PC-3 (cell line): ENCODE measurements at regions of chr18 and their contacts with region 1.

Region 1: DNA sequence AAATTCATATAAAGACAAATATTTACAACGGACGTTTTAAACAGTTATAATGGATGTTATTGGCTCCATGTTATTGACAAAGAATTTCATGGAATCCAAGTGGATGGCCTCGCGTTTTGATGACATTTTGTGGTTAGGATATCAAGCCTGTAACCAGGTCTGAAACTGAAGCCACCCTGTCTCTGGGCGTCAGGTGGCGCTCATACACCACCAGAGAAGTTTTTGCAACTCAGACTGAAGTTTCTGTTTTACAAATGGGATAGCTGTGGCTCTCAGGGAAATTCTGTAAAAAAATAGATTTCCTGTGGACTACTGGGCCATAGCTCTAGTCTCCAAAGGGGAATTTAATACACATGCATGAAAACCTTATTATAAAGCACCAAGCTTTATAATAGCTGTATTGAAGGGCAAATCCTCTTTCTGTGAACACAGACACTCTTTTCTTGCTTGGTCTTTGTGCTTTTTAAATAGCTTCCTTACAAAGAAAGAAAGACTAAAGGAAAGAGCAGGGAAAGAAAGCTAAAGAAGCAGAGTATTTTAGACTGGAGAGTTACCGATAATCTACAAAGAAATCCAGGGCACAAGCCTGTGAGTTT is 86.7 kb downstream of the C18orf54 start:
- DNase-seq: peak; percentile 76
- ATAC-seq: peak; percentile 82
- H3K4me3 ChIP-seq: no peak overlapping the region
- H3K27ac ChIP-seq: no peak overlapping the region
- H3K4me1 ChIP-seq: no peaks in the 10 kb centered on the region
- H3K27me3 ChIP-seq: no peaks in the 10 kb centered on the region
- CTCF ChIP-seq: peak; percentile 94

Region 2: DNA sequence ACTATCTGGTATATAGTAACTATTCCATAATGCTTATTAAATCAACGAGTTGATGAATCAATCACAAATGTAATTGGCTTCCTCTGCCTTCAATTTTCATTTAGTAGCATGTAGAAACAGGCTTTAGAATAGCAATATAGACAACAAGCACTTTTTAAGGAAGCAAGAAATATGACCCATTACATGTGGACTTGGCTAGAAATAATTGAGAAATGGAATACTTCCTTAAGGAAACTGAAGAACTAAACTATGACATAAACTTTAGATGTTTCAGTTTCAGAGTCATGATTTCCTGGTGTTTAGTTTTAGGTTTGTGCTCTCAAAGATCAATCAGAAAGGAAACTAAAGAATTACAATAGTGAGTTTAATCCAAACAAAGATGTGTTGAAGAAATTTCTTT is 663.8 kb before region 1 on chr18:
- CTCF ChIA-PET with region 1: no interaction called
- POLR2A ChIA-PET with region 1: no interaction called
- intact Hi-C with region 1: no loop called
- DNase-seq: no peak
- ATAC-seq: no peak
- H3K4me3 ChIP-seq: no peak overlapping the region
- H3K27ac ChIP-seq: no peak overlapping the region
- H3K4me1 ChIP-seq: no peaks in the 10 kb centered on the region
- H3K27me3 ChIP-seq: no peaks in the 10 kb centered on the region
- CTCF ChIP-seq: no peak

Region 3: GRCh38 chr18:54392543-54393023 is 51.8 kb before region 1 on chr18:
- CTCF ChIA-PET with region 1: interaction called, 4 read pairs
- POLR2A ChIA-PET with region 1: no interaction called
- intact Hi-C with region 1: loop called (anchors 2 kb)
- DNase-seq: peak; percentile 90
- ATAC-seq: peak; percentile 27
- H3K4me3 ChIP-seq: no peak overlapping the region
- H3K27ac ChIP-seq: no peak overlapping the region
- H3K4me1 ChIP-seq: peaks cover 25% of the 10 kb centered on the region
- H3K27me3 ChIP-seq: no peaks in the 10 kb centered on the region
- CTCF ChIP-seq: peak; percentile 76

Region 4: DNA sequence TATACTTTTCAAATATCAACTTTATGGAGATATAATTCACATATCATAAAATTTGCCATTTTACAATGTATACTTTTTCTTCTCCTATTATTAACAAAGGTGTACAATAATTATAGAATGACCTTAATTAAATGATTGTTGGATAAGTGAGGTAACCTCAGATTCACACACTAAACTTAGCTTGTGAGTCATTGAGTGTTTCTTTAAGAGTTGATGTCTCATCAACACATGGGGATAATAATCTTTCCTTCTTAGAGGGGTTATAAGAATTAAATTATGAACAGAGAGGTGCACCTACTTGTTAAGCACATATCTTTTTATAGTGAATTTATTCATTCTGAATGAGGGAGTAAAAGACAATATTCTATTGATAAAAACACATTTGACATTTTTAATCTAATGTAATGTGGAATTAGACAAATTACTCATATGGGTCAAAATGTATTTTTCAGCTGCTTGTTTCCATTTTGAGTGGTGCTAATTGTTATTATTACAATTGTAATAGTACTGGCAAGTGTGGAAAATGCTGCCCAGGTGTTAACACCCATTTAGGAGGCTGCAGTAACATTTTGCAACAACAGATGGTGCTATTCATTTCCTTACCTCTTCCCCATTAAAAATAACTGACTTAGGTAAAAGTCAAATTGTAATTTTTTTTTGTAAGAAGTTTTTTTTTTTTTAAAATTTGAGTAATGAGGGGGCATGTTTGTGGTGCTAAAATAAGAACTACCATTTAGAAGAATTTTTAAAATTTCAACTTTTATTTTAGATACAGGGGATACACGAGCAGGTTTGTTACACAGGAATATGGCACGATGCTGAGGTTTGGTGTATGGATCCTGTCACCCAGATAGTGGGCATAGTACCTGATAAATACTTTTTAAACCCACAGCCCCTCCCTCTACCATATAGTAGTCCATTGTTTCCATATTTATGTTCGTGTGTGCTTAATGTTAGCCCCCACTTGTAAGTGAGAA is 114.5 kb after region 1 on chr18:
- CTCF ChIA-PET with region 1: no interaction called
- POLR2A ChIA-PET with region 1: no interaction called
- intact Hi-C with region 1: loop called (anchors 1 kb)
- DNase-seq: peak; percentile 59
- ATAC-seq: no peak
- H3K4me3 ChIP-seq: no peak overlapping the region
- H3K27ac ChIP-seq: no peak overlapping the region
- H3K4me1 ChIP-seq: no peaks in the 10 kb centered on the region
- H3K27me3 ChIP-seq: no peaks in the 10 kb centered on the region
- CTCF ChIP-seq: peak; percentile 80

Region 5: GRCh38 chr18:54647176-54647575 is 202.8 kb after region 1 on chr18:
- CTCF ChIA-PET with region 1: no interaction called
- POLR2A ChIA-PET with region 1: no interaction called
- intact Hi-C with region 1: loop called (anchors 1 kb)
- DNase-seq: peak; percentile 69
- ATAC-seq: peak; percentile 74
- H3K4me3 ChIP-seq: no peak overlapping the region
- H3K27ac ChIP-seq: no peak overlapping the region
- H3K4me1 ChIP-seq: no peaks in the 10 kb centered on the region
- H3K27me3 ChIP-seq: peaks cover 5% of the 10 kb centered on the region; the same call in 1 of the 2 replicates
- CTCF ChIP-seq: peak; percentile 77

Region 6: DNA sequence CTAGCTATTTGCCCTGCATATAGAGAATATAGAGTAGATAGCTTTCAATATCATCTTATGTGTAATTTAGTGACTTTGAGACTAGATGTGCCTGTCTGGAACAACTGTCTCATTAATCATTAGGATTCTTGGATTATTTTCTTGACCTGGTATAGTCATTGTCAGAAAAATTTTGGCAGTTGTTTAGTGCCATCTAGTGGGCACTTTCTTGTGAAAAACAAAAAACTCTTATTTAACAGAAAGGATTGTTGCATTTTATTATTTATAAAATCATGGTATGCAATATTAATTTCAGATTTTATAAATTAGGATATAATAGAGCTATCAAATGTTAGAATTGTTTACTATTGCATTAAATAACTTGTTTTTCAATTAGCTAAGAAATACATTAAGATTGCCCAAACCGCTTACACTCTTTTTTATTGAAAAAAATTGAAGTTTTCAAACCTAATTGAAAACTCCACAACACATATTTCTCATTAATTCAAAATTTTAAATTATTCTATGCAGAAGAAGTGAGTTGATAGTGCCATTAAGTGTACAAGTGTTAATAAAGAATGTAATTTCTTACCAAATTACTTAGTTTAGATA is 227.0 kb after region 1 on chr18:
- CTCF ChIA-PET with region 1: no interaction called
- POLR2A ChIA-PET with region 1: no interaction called
- intact Hi-C with region 1: loop called (anchors 1 kb)
- DNase-seq: peak; percentile 70
- ATAC-seq: peak; percentile 29; the same call in 1 of the 2 replicates
- H3K4me3 ChIP-seq: no peak overlapping the region
- H3K27ac ChIP-seq: no peak overlapping the region
- H3K4me1 ChIP-seq: peaks cover 20% of the 10 kb centered on the region
- H3K27me3 ChIP-seq: no peaks in the 10 kb centered on the region
- CTCF ChIP-seq: peak; percentile 73

Region 7: GRCh38 chr18:54983041-54983686 is 538.7 kb after region 1 on chr18:
- CTCF ChIA-PET with region 1: no interaction called
- POLR2A ChIA-PET with region 1: no interaction called
- intact Hi-C with region 1: loop called (anchors 1 kb)
- DNase-seq: peak; percentile 82
- ATAC-seq: peak; percentile 86
- H3K4me3 ChIP-seq: no peak overlapping the region
- H3K27ac ChIP-seq: no peak overlapping the region
- H3K4me1 ChIP-seq: peaks cover 9% of the 10 kb centered on the region; the same call in 1 of the 2 replicates
- H3K27me3 ChIP-seq: no peaks in the 10 kb centered on the region
- CTCF ChIP-seq: peak; percentile 81

Region 8: DNA sequence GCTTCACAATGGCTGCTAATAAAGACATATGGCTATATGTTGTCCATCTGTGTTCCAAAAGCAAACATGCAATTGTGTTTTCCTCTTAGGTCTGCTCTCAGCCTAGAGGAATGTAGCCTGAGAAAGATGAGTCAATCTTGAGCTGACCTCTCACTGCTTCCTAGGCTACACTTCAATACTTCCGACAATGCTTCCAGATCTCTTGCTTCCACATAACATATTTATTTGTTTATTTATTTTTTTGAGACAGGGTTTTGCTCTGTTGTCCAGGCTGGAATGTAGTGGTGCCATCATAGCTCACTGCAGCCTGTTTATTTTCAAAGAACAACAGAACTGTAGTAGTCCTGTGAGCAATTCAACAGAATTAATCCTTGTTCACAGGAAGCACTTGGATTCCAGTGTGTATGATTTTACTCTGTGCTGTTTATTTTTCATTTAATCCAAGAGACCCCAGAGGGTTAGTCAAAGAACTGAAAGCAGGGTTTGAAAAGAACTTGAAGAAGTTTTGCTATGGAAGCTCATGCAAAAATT is 1756.0 kb after region 1 on chr18:
- CTCF ChIA-PET with region 1: no interaction called
- POLR2A ChIA-PET with region 1: no interaction called
- intact Hi-C with region 1: no loop called
- DNase-seq: peak; percentile 64
- ATAC-seq: peak; percentile 93
- H3K4me3 ChIP-seq: no peak overlapping the region
- H3K27ac ChIP-seq: no peak overlapping the region
- H3K4me1 ChIP-seq: peaks cover 12% of the 10 kb centered on the region
- H3K27me3 ChIP-seq: no peaks in the 10 kb centered on the region
- CTCF ChIP-seq: no peak